ENCODE measurements at regions of chr6 and their contacts with region 1.

Region 1: GRCh38 chr6:160455541-160456213 is 107.5 kb downstream of the SLC22A3 start:
- DNase-seq: peak; percentile 4
- H3K4me3 ChIP-seq: peak overlapping the region; percentile 33
- CTCF ChIP-seq: peak; percentile 93

Region 2: DNA sequence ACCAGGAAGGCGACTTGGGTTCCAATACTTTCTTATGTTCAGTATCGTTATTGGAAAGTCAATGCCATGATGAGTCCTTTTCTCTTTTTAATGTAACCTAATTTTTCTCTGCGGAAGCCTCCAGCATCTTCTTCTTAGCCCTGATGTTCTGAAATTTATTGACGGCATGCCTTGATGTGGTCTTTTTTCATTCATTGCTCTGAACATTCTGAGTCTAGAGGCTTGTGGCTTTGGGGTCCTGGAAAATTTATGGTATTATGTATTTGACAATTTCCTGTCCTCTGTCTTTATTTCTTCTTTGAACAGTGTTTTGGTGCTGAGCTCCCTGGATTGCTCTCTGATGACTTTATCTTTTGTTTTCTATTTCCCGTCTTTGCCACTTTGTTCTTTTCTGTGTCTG is 593.6 kb before region 1 on chr6:
- CTCF ChIA-PET with region 1: interaction called, 14 read pairs
- POLR2A ChIA-PET with region 1: no interaction called
- DNase-seq: no peak
- H3K4me3 ChIP-seq: no peak overlapping the region
- CTCF ChIP-seq: no peak

Region 3: GRCh38 chr6:160088069-160088783 is 367.5 kb before region 1 on chr6:
- CTCF ChIA-PET with region 1: interaction called, 195 read pairs
- POLR2A ChIA-PET with region 1: interaction called, 6 read pairs
- DNase-seq: peak; percentile 50
- H3K4me3 ChIP-seq: no peak overlapping the region
- CTCF ChIP-seq: peak; percentile 86

Region 4: DNA sequence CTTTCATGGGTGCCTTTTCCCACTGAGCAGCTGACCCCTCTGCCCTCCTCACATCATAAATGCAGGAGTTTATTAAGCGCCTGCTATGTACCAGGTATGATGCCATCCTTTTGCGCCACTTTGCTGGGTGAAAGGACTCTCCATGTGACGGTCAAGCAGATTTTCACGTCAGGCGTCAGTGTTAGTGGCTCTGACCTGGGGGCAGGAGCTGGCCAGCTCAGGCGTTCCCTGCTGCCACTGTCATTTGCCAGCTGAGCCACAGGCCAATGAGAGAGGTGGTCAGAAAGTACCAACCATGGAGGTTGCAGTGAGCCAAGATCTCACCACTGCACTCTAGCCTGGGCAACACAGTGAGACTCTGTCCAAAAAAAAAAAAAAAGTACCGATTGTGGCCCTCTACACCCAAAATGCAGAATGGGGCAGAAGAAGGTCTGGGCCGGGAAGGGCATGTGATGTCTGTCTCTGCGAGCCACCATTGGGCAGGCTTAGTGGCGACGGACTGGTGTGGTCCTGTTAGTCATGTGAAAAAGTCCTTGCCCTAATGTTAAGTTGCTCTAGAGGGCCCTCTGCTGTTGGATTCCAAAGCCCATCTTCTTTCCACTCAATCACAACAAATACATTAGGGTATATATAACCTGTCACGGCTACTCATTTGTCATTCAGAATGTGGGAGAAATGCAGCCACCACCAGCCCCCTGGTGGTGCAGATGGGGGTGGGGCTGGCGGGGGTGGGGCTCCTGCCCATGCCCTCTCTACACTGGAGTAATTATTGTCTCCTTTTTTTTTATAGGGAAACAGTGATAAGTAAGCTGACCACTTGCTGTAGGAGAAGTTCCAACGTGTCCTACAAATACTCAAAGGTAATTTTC is 352.5 kb before region 1 on chr6:
- CTCF ChIA-PET with region 1: interaction called, 13 read pairs
- POLR2A ChIA-PET with region 1: no interaction called
- DNase-seq: no peak
- H3K4me3 ChIP-seq: no peak overlapping the region
- CTCF ChIP-seq: peak; percentile 36

Region 5: DNA sequence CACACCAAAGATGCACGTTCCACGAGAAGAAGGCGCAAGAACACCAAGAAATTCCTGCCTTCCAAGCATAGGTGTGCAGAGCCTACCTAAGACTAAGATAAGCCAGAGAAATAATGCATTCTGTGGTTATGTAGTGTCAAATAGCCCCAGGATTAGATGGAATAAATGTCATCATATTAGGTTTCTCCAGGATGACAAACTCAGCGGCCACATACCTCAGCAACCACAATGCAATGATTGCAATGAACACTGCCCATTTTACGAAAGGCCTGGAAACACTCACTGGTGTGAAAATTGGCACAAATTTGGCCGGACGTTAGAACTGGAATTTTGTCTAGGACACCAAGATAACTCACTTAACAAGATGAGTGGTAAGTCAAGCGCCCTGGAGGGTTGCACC is 22.2 kb after region 1 on chr6:
- CTCF ChIA-PET with region 1: no interaction called
- POLR2A ChIA-PET with region 1: no interaction called
- DNase-seq: no peak
- H3K4me3 ChIP-seq: no peak overlapping the region
- CTCF ChIP-seq: no peak

Region 6: DNA sequence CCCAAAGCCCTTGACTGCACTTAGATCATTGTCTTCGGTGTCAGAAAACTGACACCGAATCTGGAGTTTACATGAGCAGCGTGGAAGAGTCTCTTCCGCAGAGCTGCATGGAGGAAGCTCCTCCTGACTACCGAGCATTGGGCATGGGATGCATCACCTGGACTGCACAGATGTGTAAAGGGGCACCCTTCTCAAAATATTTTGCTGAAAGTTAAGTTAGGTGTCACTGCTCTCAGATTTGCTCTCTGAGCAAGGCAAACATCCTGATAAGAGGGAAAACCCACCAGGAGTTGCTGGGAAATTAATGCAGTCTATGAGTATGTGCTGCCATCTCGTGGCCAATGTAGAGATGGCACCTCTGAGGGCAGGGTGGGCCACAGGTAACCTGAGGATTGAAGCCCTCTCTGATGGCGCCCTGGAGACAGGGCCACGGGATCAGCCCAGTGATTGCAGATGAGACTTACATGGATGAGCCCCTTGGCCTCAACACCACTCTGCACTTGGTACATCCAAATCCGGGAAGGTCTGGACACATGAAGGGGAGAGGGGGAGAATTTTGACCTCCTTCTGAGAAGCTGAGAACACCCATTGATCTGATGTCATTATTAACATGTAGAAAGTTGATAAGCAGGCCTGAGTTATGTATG is 78.5 kb after region 1 on chr6:
- CTCF ChIA-PET with region 1: interaction called, 10 read pairs
- POLR2A ChIA-PET with region 1: no interaction called
- DNase-seq: no peak
- H3K4me3 ChIP-seq: no peak overlapping the region
- CTCF ChIP-seq: peak; percentile 78